Mammary epithelial cell (primary cell): ENCODE measurements at regions of chr21 and their contacts with region 1.

Region 1: GRCh38 chr21:17402937-17403336 is 109.9 kb upstream of the CXADR start:
- DNase-seq: no peak
- H3K4me3 ChIP-seq: no peak overlapping the region
- H3K27ac ChIP-seq: no peak overlapping the region
- H3K4me1 ChIP-seq: no peaks in the 10 kb centered on the region
- H3K27me3 ChIP-seq: peaks cover 1% of the 10 kb centered on the region
- CTCF ChIP-seq: no peak

Region 2: GRCh38 chr21:17585875-17586450 is 183.0 kb after region 1 on chr21:
- CTCF ChIA-PET with region 1: no interaction called
- dilution Hi-C with region 1: no loop called
- in situ Hi-C with region 1: loop called in 1 of 2 experiments (anchors 10 kb)
- intact Hi-C with region 1: no loop called
- DNase-seq: peak; percentile 24
- H3K4me3 ChIP-seq: no peak overlapping the region
- H3K27ac ChIP-seq: no peak overlapping the region
- H3K4me1 ChIP-seq: no peaks in the 10 kb centered on the region
- H3K27me3 ChIP-seq: no peaks in the 10 kb centered on the region
- CTCF ChIP-seq: peak; percentile 50 to 62

Region 3: GRCh38 chr21:17660449-17660848 is 257.5 kb after region 1 on chr21:
- CTCF ChIA-PET with region 1: no interaction called
- dilution Hi-C with region 1: no loop called
- in situ Hi-C with region 1: no loop called
- intact Hi-C with region 1: no loop called
- DNase-seq: no peak
- H3K4me3 ChIP-seq: no peak overlapping the region
- H3K27ac ChIP-seq: no peak overlapping the region
- H3K4me1 ChIP-seq: no peaks in the 10 kb centered on the region
- H3K27me3 ChIP-seq: peaks cover 3% of the 10 kb centered on the region
- CTCF ChIP-seq: no peak